Naive thymus-derived CD4-positive, alpha-beta T cell (primary cell): ENCODE measurements at regions of chr17 and their contacts with region 1.

Region 1: GRCh38 chr17:55601874-55602364 is 90.7 kb upstream of the SMIM36 start:
- DNase-seq: peak in 6 of 9 donors; percentile 13 to 44 (median 28)
- ATAC-seq: peak; percentile 50
- H3K4me3 ChIP-seq: no peak overlapping the region
- H3K4me3 Mint-ChIP-seq: no peak overlapping the region
- H3K27ac ChIP-seq: no peak overlapping the region
- H3K27ac Mint-ChIP-seq: no peak overlapping the region
- H3K4me1 ChIP-seq: no peaks in the 10 kb centered on the region
- H3K4me1 Mint-ChIP-seq: no peaks in the 10 kb centered on the region
- H3K27me3 ChIP-seq: no peaks in the 10 kb centered on the region
- H3K27me3 Mint-ChIP-seq: peaks cover 11 to 28% (median 19%) of the 10 kb centered on the region in 5 donors

Region 2: GRCh38 chr17:55190748-55191147 is 411.2 kb before region 1 on chr17:
- CTCF ChIA-PET with region 1: no interaction called
- POLR2A ChIA-PET with region 1: no interaction called
- intact Hi-C with region 1: no loop called
- DNase-seq: no peak
- ATAC-seq: no peak
- H3K4me3 ChIP-seq: no peak overlapping the region
- H3K4me3 Mint-ChIP-seq: no peak overlapping the region
- H3K27ac ChIP-seq: no peak overlapping the region
- H3K27ac Mint-ChIP-seq: no peak overlapping the region
- H3K4me1 ChIP-seq: no peaks in the 10 kb centered on the region
- H3K4me1 Mint-ChIP-seq: no peaks in the 10 kb centered on the region
- H3K27me3 ChIP-seq: no peaks in the 10 kb centered on the region
- H3K27me3 Mint-ChIP-seq: peaks cover 0 to 15% (median 6%) of the 10 kb centered on the region in 5 donors

Region 3: GRCh38 chr17:55549140-55549539 is 52.8 kb before region 1 on chr17:
- CTCF ChIA-PET with region 1: interaction called, 7 read pairs
- POLR2A ChIA-PET with region 1: interaction called, 4 read pairs
- intact Hi-C with region 1: loop called in 1 of 2 experiments (anchors 1 kb)
- DNase-seq: peak in 2 of 9 donors; percentile 3 to 11
- ATAC-seq: no peak
- H3K4me3 ChIP-seq: no peak overlapping the region
- H3K4me3 Mint-ChIP-seq: no peak overlapping the region
- H3K27ac ChIP-seq: no peak overlapping the region
- H3K27ac Mint-ChIP-seq: peak overlapping the region in 1 of 9 donors; percentile 6
- H3K4me1 ChIP-seq: no peaks in the 10 kb centered on the region
- H3K4me1 Mint-ChIP-seq: peaks cover 0 to 7% (median 0%) of the 10 kb centered on the region in 7 donors
- H3K27me3 ChIP-seq: no peaks in the 10 kb centered on the region
- H3K27me3 Mint-ChIP-seq: peaks cover 11 to 25% (median 13%) of the 10 kb centered on the region in 5 donors

Region 4: DNA sequence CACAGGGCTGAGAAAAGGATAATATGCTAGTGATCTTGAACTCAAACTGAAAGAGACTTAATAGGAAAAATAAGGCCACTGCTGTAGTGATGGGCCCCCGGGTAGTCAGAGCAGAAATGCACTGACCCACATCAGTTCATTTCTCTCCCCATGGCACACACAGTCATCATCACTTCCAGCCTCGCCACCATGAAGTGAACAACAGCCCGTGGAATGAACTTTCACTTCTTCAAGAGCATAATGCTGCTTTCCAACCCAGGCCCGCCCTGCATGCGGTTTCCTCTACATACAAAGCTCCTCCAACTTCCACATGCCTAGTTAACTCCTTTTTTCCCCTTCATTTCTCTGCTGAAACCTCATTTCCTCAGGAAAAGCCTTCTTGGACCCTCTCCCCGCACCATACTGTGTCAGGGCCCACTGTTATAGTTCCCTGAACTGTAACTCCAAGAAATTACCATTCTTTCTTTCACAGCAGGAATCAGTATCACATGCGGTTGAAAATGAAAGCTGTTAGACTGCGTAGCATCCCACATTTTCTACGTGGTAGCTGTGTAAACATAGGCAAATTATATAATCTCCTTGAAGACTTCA is 24.8 kb before region 1 on chr17:
- CTCF ChIA-PET with region 1: interaction called, 5 read pairs
- POLR2A ChIA-PET with region 1: interaction called, 5 read pairs
- intact Hi-C with region 1: loop called in 1 of 2 experiments (anchors 2 kb)
- DNase-seq: peak in 8 of 9 donors; percentile 11 to 56 (median 50)
- ATAC-seq: peak; percentile 88
- H3K4me3 ChIP-seq: peak overlapping the region; percentile 49
- H3K4me3 Mint-ChIP-seq: no peak overlapping the region
- H3K27ac ChIP-seq: peak overlapping the region; percentile 60
- H3K27ac Mint-ChIP-seq: no peak overlapping the region
- H3K4me1 ChIP-seq: peaks cover 0 to 16% of the 10 kb centered on the region in 2 donors
- H3K4me1 Mint-ChIP-seq: peaks cover 0 to 10% (median 0%) of the 10 kb centered on the region in 7 donors
- H3K27me3 ChIP-seq: no peaks in the 10 kb centered on the region
- H3K27me3 Mint-ChIP-seq: peaks cover 0 to 13% (median 0%) of the 10 kb centered on the region in 5 donors

Region 5: DNA sequence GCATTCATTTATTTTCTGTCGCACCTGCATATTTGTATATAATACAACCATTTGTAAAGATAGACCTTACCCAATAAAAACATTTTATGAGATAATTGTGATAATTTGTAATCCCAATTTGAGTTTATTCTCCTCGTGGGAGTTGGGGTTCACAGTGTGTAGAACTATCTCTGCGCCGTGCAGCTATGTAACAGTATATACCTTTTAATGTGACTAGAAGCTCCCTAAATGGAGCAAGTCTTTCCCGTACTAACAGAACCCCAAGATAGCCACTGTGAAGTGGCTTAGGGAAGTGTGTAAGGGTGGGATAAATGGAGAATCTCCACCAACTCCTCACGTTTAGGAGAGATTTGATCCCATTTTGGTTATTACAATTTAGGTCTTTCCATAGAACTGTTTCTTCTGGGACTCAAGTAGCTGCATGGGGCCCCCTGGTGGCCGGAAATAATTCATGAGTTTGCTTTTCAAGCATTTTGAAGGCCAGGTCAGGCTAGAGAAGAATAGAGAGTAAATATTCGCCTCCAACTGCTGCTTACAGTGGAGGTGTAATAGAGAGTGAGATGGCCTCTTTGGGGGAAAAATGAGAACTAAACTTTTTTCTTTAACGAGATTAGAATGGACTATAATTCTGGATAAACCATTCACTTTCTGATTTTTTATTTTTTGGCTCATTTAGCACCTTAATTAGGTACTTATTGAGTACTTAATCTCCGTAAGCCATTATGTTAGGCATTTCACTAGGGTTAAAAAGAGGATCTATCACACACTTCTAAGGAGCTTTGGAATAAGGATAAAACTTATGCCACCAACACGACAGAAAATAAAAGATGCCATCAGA is 116.2 kb after region 1 on chr17:
- CTCF ChIA-PET with region 1: interaction called, 8 read pairs
- POLR2A ChIA-PET with region 1: no interaction called
- intact Hi-C with region 1: loop called in 1 of 2 experiments (anchors 2 kb)
- DNase-seq: peak; percentile 20 to 58 (median 38)
- ATAC-seq: peak; percentile 49
- H3K4me3 ChIP-seq: no peak overlapping the region
- H3K4me3 Mint-ChIP-seq: no peak overlapping the region
- H3K27ac ChIP-seq: no peak overlapping the region
- H3K27ac Mint-ChIP-seq: no peak overlapping the region
- H3K4me1 ChIP-seq: no peaks in the 10 kb centered on the region
- H3K4me1 Mint-ChIP-seq: no peaks in the 10 kb centered on the region
- H3K27me3 ChIP-seq: no peaks in the 10 kb centered on the region
- H3K27me3 Mint-ChIP-seq: peaks cover 14 to 29% (median 27%) of the 10 kb centered on the region in 5 donors

Region 6: DNA sequence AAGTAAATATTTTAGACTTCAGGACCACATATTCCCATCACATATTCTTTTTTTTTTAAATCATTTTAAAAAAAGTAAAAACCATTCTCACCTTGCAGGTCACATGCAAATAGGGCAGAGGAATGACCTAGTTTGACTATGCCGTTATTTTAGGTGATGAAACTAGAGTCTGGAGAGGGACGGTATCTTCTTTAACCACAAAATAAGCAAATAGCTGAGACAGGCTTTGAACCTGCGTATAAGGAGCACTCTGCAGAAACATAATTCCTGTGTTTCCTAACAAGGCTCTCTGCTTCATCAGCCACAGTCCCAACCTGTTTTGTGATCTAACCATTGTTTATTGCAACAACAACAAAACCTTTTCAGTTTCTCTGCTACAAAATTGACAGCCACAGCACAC is 270.5 kb after region 1 on chr17:
- CTCF ChIA-PET with region 1: no interaction called
- POLR2A ChIA-PET with region 1: no interaction called
- intact Hi-C with region 1: no loop called
- DNase-seq: no peak
- ATAC-seq: no peak
- H3K4me3 ChIP-seq: no peak overlapping the region
- H3K4me3 Mint-ChIP-seq: no peak overlapping the region
- H3K27ac ChIP-seq: no peak overlapping the region
- H3K27ac Mint-ChIP-seq: no peak overlapping the region
- H3K4me1 ChIP-seq: no peaks in the 10 kb centered on the region
- H3K4me1 Mint-ChIP-seq: no peaks in the 10 kb centered on the region
- H3K27me3 ChIP-seq: no peaks in the 10 kb centered on the region
- H3K27me3 Mint-ChIP-seq: peaks cover 0 to 14% (median 4%) of the 10 kb centered on the region in 5 donors